ENCODE measurements at regions of chr9 and their contacts with region 1.

Region 1: DNA sequence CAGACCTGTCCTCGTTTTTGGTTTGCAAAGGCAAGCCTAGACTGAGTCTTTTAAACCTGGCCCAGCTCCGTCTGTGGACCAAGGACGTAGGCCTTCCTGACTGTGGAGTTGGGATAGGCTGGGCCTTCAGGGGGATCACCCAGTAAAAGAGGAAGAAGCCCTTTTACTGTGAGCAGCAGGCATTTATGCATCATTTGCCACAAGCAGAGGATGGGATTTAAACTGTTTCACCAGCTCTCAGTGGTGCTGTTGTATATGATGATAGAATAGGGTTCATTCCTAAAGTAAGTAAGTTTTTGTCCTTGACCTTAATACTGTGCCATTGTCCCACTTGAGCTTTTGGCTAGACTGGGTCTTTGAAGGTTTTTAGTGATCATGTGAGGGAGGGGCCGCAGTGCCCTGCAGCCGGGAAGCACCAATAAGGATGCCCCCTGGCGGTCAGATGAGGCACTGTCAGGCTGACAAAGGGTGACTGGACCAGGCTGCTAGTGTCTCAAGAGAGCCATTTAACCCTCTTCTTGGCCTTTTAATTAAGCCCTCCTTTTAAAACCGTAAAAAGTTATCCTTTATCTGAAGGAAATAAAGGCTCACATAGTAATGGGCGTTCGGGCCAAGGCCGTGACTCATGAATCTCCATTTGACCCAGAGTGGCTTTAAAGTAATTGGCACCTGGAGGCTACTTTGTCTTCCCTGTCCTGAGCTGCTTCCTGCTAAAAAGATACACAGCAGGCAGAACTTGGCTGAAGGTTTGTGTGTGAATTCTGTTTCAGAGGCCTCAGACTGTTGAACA is 74.0 kb downstream of the UBAP1 start:
- DNase-seq: peak; percentile 64
- H3K4me3 Mint-ChIP-seq: no peak overlapping the region
- H3K27ac Mint-ChIP-seq: peak overlapping the region; percentile 94
- H3K4me1 Mint-ChIP-seq: peaks cover 32% of the 10 kb centered on the region
- H3K27me3 Mint-ChIP-seq: no peaks in the 10 kb centered on the region
- CTCF ChIP-seq: peak; percentile 72

Region 2: DNA sequence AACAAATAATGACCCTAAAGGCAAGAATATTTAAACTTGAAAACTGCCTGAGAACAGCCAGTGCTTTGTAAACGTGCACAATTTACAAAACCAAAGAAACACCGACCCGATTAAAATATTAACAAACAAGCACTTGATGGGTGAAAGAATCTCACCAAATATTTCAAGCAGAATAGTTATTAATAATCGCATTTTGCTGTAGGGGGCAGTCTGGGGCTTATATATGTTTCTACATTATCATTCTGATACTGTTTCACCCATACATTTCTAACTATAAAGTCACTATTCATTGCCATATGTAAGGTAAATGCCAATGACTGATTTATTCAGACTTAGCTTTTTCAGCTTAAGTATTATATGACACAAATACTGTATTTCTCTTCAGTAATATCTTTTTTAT is 241.9 kb before region 1 on chr9:
- CTCF ChIA-PET with region 1: interaction called, 5 read pairs
- POLR2A ChIA-PET with region 1: no interaction called
- intact Hi-C with region 1: loop called (anchors 5 kb)
- DNase-seq: peak; percentile 22
- H3K4me3 Mint-ChIP-seq: no peak overlapping the region
- H3K27ac Mint-ChIP-seq: no peak overlapping the region
- H3K4me1 Mint-ChIP-seq: no peaks in the 10 kb centered on the region
- H3K27me3 Mint-ChIP-seq: no peaks in the 10 kb centered on the region
- CTCF ChIP-seq: peak; percentile 29

Region 3: DNA sequence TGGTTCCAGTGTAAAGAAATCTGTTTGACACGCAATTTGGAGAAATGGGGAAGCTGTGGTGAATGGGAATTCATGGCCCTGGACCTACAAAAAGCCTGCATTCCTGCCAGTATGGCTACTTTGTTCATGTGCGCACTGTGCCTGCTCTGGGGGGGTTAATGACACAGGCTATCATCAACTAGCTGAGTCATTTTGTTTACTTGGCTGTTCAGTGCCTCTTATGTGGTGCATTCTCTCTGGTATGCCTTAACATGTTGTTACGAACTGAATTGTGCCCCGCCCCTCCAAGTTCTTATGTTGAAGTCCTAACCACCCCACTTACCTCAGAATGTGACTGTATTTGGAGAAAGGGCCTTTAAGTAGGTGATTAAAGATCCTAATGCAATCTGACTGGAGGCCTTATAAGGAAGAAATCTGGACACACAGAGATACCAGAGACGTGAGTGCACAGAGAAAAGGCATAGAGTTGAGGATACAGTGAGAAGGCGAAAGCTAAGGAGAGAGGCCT is 94.4 kb before region 1 on chr9:
- CTCF ChIA-PET with region 1: interaction called, 11 read pairs
- POLR2A ChIA-PET with region 1: interaction called, 17 read pairs
- intact Hi-C with region 1: no loop called
- DNase-seq: peak; percentile 84
- H3K4me3 Mint-ChIP-seq: no peak overlapping the region
- H3K27ac Mint-ChIP-seq: peak overlapping the region; percentile 57
- H3K4me1 Mint-ChIP-seq: peaks cover 20% of the 10 kb centered on the region
- H3K27me3 Mint-ChIP-seq: no peaks in the 10 kb centered on the region
- CTCF ChIP-seq: no peak

Region 4: GRCh38 chr9:34178520-34179212 is 74.2 kb before region 1 on chr9 and contains the start of gene UBAP1:
- CTCF ChIA-PET with region 1: interaction called, 26 read pairs
- POLR2A ChIA-PET with region 1: interaction called, 86 read pairs
- intact Hi-C with region 1: no loop called
- DNase-seq: peak; percentile 99
- H3K4me3 Mint-ChIP-seq: peak within 1 kb of the TSS; percentile 99
- H3K27ac Mint-ChIP-seq: peak within 1 kb of the TSS; percentile 99
- H3K4me1 Mint-ChIP-seq: peaks cover 16% of the 10 kb centered on the region
- H3K27me3 Mint-ChIP-seq: no peaks in the 10 kb centered on the region
- CTCF ChIP-seq: no peak
- total RNA-seq, gene UBAP1: 58.0 and 64.4 TPM in 2 replicates

Region 5: DNA sequence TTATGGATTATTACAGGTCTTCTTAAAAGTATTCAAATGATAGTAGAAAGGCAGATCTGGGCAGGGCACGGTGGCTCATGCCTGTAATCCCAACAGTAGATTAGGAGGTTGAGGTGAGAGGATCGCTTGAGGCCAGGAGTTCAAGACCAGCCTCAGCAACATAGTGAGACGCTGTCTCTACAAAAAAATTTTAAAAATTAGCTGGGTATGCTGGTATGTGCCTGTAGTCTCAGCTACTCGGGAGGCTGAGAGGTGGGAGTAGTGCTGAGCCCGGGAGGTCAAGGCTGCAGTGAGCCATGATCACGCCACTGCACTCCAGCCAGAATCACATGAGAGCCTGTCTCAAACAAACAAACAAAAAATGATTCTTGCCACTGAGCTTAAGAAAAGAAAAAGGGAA is 30.4 kb before region 1 on chr9:
- CTCF ChIA-PET with region 1: interaction called, 7 read pairs
- POLR2A ChIA-PET with region 1: interaction called, 13 read pairs
- intact Hi-C with region 1: no loop called
- DNase-seq: no peak
- H3K4me3 Mint-ChIP-seq: no peak overlapping the region
- H3K27ac Mint-ChIP-seq: peak overlapping the region; percentile 61
- H3K4me1 Mint-ChIP-seq: peaks cover 13% of the 10 kb centered on the region
- H3K27me3 Mint-ChIP-seq: no peaks in the 10 kb centered on the region
- CTCF ChIP-seq: no peak

Region 6: GRCh38 chr9:34267660-34268059 is 14.8 kb after region 1 on chr9:
- CTCF ChIA-PET with region 1: interaction called, 7 read pairs
- POLR2A ChIA-PET with region 1: interaction called, 11 read pairs
- intact Hi-C with region 1: no loop called
- DNase-seq: peak; percentile 16
- H3K4me3 Mint-ChIP-seq: no peak overlapping the region
- H3K27ac Mint-ChIP-seq: no peak overlapping the region
- H3K4me1 Mint-ChIP-seq: no peaks in the 10 kb centered on the region
- H3K27me3 Mint-ChIP-seq: no peaks in the 10 kb centered on the region
- CTCF ChIP-seq: no peak

Region 7: DNA sequence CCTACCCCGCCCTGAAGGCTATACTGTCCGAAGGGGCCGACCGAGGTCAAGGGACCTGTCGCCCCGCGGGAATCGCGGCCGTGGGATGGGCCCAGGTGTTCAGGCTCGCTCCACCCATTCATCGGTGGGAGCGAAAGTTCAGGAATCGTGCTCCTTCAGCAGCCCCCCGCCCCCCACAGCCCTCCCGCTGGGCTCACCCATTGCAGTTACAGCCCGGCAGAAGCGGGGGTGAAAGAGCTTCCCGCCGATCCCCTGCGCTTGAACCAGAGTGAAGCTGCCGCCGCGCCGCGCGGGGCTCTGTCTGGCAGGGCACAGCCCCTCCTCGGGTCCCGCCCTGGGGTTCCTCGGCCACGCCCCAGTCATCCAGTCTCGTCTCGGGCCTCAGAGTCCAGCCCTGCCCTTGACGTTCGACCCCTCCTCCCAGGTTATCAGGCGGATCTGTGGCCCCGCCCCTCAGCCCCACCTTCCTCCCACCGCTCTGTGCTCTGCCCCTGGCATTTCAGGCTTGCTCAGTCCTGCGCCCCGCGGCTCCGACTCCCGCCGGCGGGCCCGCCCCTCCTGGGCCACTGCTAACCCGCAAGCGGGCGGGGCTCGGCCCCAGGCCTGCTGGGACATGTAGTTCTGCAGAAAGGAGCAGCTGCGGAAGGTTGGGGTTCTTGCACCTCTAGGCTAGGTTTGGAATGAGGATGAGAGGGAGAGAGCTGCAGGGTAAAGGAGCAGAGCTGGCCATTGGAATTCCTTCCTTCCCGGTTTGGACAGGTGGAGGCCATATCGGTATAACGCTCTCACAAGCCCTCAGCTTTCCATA is 123.9 kb after region 1 on chr9 and contains the start of gene MYORG:
- CTCF ChIA-PET with region 1: interaction called, 31 read pairs
- POLR2A ChIA-PET with region 1: interaction called, 7 read pairs
- intact Hi-C with region 1: loop called (anchors 1 kb)
- DNase-seq: peak; percentile 98
- H3K4me3 Mint-ChIP-seq: peak within 1 kb of the TSS; percentile 72
- H3K27ac Mint-ChIP-seq: peak within 1 kb of the TSS; percentile 68
- H3K4me1 Mint-ChIP-seq: peaks cover 35% of the 10 kb centered on the region
- H3K27me3 Mint-ChIP-seq: no peaks in the 10 kb centered on the region
- CTCF ChIP-seq: no peak
- total RNA-seq, gene MYORG: 2.4 and 2.9 TPM in 2 replicates

Measured in MCF 10A (cell line).